ENCODE measurements at regions of chrX and their contacts with region 1.

Region 1: GRCh38 chrX:104136241-104137019 is 20.4 kb downstream of the SLC25A53 start:
- DNase-seq: peak; percentile 53
- H3K4me3 ChIP-seq: peak overlapping the region; percentile 58
- CTCF ChIP-seq: peak; percentile 58

Region 2: GRCh38 chrX:104098151-104098808 is 38.1 kb before region 1 on chrX:
- CTCF ChIA-PET with region 1: interaction called, 13 read pairs
- POLR2A ChIA-PET with region 1: no interaction called
- DNase-seq: peak; percentile 21
- H3K4me3 ChIP-seq: no peak overlapping the region
- CTCF ChIP-seq: peak; percentile 37

Region 3: DNA sequence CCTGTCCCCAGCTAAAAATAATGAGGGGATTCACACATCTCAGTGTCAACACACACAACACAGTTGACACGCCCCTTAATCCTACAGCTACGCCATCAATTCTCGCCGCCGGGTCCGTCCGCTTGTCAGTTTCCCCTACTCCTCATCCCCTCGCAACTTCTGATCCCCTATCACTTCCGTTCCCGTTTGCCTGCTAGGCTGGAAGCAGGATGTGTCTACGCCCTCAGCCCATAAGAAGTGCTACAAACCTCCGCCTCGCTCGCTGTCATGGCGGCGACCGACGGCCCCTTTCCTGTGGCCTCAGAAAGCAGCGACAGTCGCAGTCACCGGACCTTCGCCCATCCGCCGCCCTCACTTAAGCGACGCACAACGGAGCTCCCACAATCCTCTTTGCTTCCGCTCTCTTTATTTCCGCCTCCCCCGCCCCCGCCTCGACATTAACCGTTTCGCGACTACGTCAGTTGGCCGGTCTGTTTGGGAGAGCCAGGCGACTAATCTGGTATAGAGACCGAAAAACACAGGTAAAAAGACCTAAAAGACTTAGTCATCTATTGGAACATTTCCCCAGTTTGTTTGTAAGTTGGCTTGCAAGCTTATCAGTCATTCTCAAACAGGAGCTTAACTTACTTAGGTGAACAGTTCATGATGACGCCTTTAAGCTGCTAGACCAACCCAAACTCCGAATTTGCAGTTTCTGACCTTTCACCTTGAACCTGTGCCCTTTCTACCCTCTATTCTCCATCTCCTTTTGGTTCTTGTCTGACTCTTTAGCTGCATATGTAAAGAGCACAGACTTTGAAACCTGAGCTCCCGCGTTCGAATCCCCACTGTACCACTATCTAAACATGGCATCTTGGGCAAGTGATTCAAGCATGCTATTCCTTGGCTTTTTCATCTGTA is 20.4 kb after region 1 on chrX and contains the start of gene SLC25A53:
- CTCF ChIA-PET with region 1: interaction called, 10 read pairs
- POLR2A ChIA-PET with region 1: interaction called, 4 read pairs
- DNase-seq: no peak
- H3K4me3 ChIP-seq: peak within 1 kb of the TSS; percentile 73
- CTCF ChIP-seq: no peak

Measured in AG04449 (cell line).